ENCODE measurements at regions of chr13 and their contacts with region 1.

Region 1: GRCh38 chr13:79423801-79424642 is 18.0 kb upstream of the RBM26 start:
- DNase-seq: peak; percentile 53
- H3K4me3 ChIP-seq: no peak overlapping the region
- H3K27ac ChIP-seq: no peak overlapping the region
- H3K4me1 ChIP-seq: no peaks in the 10 kb centered on the region
- H3K27me3 ChIP-seq: no peaks in the 10 kb centered on the region
- CTCF ChIP-seq: peak; percentile 30 to 39
- POLR2A ChIP-seq: no peak

Region 2: DNA sequence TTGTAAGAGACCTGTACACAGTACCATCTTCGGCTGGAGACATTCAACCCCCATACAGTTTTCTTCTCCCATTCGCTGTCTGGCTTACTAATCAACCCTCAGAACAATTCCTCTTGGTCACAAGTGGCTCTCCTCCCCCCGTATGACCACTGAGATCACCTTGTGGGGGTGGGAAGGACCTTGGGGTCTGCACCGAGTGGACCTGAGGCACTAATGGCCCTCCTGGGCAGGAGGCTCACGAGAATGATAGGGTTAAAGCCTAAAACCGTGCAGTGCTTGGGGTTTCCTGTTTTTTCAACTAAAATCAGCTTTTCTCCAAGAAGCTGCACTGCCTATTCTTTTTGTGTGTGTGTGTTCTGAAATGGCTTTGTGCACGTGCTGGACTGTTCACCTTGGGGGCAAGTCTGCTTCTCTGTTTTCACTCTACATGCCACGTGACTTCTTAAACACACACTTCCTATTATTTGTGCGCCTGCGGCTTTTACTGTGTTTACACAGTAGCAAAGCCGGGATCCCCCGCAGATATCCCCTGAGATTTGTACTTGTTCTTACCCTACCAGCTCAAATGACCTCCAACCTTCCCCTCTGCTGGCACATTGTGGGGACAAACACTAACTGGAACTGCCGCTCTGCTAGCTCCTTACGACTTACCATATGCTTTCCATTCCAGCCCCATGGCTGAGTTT is 30.3 kb before region 1 on chr13:
- CTCF ChIA-PET with region 1: interaction called, 12 read pairs
- POLR2A ChIA-PET with region 1: no interaction called
- dilution Hi-C with region 1: no loop called
- intact Hi-C with region 1: no loop called
- DNase-seq: peak; percentile 83
- H3K4me3 ChIP-seq: no peak overlapping the region
- H3K27ac ChIP-seq: peak overlapping the region; percentile 8
- H3K4me1 ChIP-seq: peaks cover 18% of the 10 kb centered on the region
- H3K27me3 ChIP-seq: no peaks in the 10 kb centered on the region
- CTCF ChIP-seq: no peak
- POLR2A ChIP-seq: no peak

Region 3: GRCh38 chr13:79435561-79435990 is 11.6 kb after region 1 on chr13:
- CTCF ChIA-PET with region 1: interaction called, 41 read pairs
- POLR2A ChIA-PET with region 1: no interaction called
- dilution Hi-C with region 1: no loop called
- intact Hi-C with region 1: no loop called
- DNase-seq: peak; percentile 46
- H3K4me3 ChIP-seq: no peak overlapping the region
- H3K27ac ChIP-seq: no peak overlapping the region
- H3K4me1 ChIP-seq: no peaks in the 10 kb centered on the region
- H3K27me3 ChIP-seq: no peaks in the 10 kb centered on the region
- CTCF ChIP-seq: no peak
- POLR2A ChIP-seq: no peak

Region 4: GRCh38 chr13:79457948-79458347 is 33.9 kb after region 1 on chr13:
- CTCF ChIA-PET with region 1: interaction called, 21 read pairs
- POLR2A ChIA-PET with region 1: no interaction called
- dilution Hi-C with region 1: no loop called
- intact Hi-C with region 1: no loop called
- DNase-seq: peak; percentile 79
- H3K4me3 ChIP-seq: no peak overlapping the region
- H3K27ac ChIP-seq: peak overlapping the region; percentile 5
- H3K4me1 ChIP-seq: peaks cover 9% of the 10 kb centered on the region
- H3K27me3 ChIP-seq: no peaks in the 10 kb centered on the region
- CTCF ChIP-seq: no peak
- POLR2A ChIP-seq: no peak

Region 5: GRCh38 chr13:79512950-79513349 is 88.9 kb after region 1 on chr13:
- CTCF ChIA-PET with region 1: interaction called, 41 read pairs
- POLR2A ChIA-PET with region 1: no interaction called
- dilution Hi-C with region 1: no loop called
- intact Hi-C with region 1: no loop called
- DNase-seq: no peak
- H3K4me3 ChIP-seq: no peak overlapping the region
- H3K27ac ChIP-seq: no peak overlapping the region
- H3K4me1 ChIP-seq: peaks cover 7% of the 10 kb centered on the region
- H3K27me3 ChIP-seq: no peaks in the 10 kb centered on the region
- CTCF ChIP-seq: no peak
- POLR2A ChIP-seq: no peak

Region 6: DNA sequence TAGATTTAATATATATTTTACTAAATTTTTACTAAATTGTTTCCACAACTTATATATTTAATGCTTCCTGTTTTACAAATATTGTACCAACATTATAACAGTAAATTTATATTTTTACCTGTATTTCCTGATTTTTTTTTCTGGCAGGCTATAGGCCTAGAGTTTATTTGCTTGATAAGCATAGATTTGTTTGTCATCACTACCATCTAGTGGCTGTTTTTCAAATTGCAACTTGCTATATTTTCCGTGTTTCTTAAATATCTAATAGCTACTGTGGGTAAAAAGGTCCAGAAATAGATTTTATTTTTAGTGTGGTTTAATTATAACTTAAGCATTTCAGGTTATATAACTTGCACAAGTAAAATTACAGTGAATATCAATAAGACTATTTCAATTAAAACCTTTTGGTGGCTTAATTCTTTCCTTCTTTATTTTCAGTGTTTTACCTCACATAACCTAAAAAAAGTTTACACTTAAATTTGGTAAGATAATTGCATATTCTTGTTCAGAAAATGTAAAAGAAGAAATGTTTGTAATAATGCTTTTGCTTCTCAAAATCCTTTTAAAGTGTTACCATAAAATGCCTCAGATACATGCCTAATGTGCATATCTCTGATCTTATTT is 117.5 kb after region 1 on chr13:
- CTCF ChIA-PET with region 1: interaction called, 815 read pairs
- POLR2A ChIA-PET with region 1: interaction called, 6 read pairs
- dilution Hi-C with region 1: no loop called
- intact Hi-C with region 1: loop called (anchors 1 kb)
- DNase-seq: peak; percentile 79
- H3K4me3 ChIP-seq: no peak overlapping the region
- H3K27ac ChIP-seq: no peak overlapping the region
- H3K4me1 ChIP-seq: no peaks in the 10 kb centered on the region
- H3K27me3 ChIP-seq: no peaks in the 10 kb centered on the region
- CTCF ChIP-seq: peak; percentile 33 to 50
- POLR2A ChIP-seq: no peak

Measured in endothelial cell of umbilical vein (primary cell).